ENCODE measurements at regions of chr5 and their contacts with region 1.

Region 1: GRCh38 chr5:142713121-142713706 is 27.3 kb upstream of the FGF1 start:
- DNase-seq: peak; percentile 79
- H3K4me3 ChIP-seq: peak overlapping the region; percentile 59 to 70 (median 67)
- H3K27ac ChIP-seq: peak overlapping the region; percentile 68
- H3K4me1 ChIP-seq: peaks cover 5% of the 10 kb centered on the region
- H3K27me3 ChIP-seq: no peaks in the 10 kb centered on the region
- CTCF ChIP-seq: peak; percentile 73 to 88

Region 2: GRCh38 chr5:142611154-142611553 is 102.1 kb before region 1 on chr5:
- CTCF ChIA-PET with region 1: no interaction called
- dilution Hi-C with region 1: no loop called
- in situ Hi-C with region 1: no loop called
- intact Hi-C with region 1: loop called (anchors 1 kb)
- DNase-seq: peak; percentile 58
- H3K4me3 ChIP-seq: no peak overlapping the region
- H3K27ac ChIP-seq: no peak overlapping the region
- H3K4me1 ChIP-seq: peaks cover 22% of the 10 kb centered on the region
- H3K27me3 ChIP-seq: no peaks in the 10 kb centered on the region
- CTCF ChIP-seq: peak; percentile 87 to 92

Region 3: DNA sequence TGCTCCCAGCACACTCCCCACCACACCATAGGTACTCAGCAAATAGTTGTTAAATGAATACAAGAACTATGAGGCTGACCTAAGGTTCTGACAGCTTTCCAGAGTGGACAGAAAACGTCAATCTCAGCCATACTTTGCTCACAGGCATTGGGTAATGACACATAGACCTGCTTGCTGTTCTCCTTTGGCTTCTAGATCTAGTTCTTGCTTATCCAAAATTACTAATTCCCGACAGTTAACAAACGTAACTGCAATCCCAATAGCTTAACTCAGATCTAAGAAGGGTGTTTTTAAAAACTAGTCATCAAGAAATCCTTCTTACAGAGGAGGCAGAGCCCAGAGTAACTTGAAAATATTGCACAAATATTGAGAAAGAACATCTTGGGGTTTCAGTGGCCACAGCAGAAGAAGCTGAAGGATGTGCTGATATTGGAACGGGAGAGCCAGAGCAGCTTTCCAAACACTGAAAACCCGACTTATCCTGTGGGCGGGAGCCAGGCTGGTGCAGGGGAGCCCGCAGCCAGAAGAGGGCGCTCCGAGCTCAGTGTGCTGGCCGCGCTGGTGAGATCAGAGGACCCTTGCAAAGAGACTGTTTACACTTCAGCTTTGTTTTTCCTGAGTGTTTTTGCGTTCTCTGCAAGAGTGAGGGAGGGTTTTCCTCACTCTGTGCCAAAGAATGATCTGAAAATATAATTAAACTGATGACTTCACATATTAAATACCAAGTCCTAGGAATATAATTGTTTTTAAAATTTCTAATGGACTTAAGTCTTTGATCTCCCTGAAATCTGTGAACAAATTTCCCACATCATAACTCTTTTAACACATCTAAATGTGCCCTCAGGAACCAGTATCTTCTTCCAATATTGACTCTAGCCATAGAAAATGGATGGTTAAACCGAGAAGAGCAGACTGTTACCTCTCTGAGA is 57.6 kb before region 1 on chr5:
- CTCF ChIA-PET with region 1: interaction called, 8 read pairs
- dilution Hi-C with region 1: no loop called
- in situ Hi-C with region 1: no loop called
- intact Hi-C with region 1: loop called (anchors 1 kb)
- DNase-seq: peak; percentile 52
- H3K4me3 ChIP-seq: no peak overlapping the region
- H3K27ac ChIP-seq: no peak overlapping the region
- H3K4me1 ChIP-seq: no peaks in the 10 kb centered on the region
- H3K27me3 ChIP-seq: no peaks in the 10 kb centered on the region
- CTCF ChIP-seq: peak; percentile 96 to 100

Region 4: GRCh38 chr5:142726188-142726731 is 13.0 kb after region 1 on chr5:
- CTCF ChIA-PET with region 1: no interaction called
- dilution Hi-C with region 1: no loop called
- in situ Hi-C with region 1: no loop called
- intact Hi-C with region 1: no loop called
- DNase-seq: peak; percentile 90
- H3K4me3 ChIP-seq: no peak overlapping the region
- H3K27ac ChIP-seq: peak overlapping the region; percentile 96
- H3K4me1 ChIP-seq: peaks cover 36% of the 10 kb centered on the region
- H3K27me3 ChIP-seq: no peaks in the 10 kb centered on the region
- CTCF ChIP-seq: no peak

Region 5: GRCh38 chr5:142881076-142881783 is 168.0 kb after region 1 on chr5:
- CTCF ChIA-PET with region 1: interaction called, 13 read pairs
- dilution Hi-C with region 1: no loop called
- in situ Hi-C with region 1: loop called in 1 of 2 experiments (anchors 5 kb)
- intact Hi-C with region 1: loop called (anchors 1 kb)
- DNase-seq: no peak
- H3K4me3 ChIP-seq: no peak overlapping the region
- H3K27ac ChIP-seq: no peak overlapping the region
- H3K4me1 ChIP-seq: peaks cover 4% of the 10 kb centered on the region
- H3K27me3 ChIP-seq: no peaks in the 10 kb centered on the region
- CTCF ChIP-seq: no peak

Region 6: DNA sequence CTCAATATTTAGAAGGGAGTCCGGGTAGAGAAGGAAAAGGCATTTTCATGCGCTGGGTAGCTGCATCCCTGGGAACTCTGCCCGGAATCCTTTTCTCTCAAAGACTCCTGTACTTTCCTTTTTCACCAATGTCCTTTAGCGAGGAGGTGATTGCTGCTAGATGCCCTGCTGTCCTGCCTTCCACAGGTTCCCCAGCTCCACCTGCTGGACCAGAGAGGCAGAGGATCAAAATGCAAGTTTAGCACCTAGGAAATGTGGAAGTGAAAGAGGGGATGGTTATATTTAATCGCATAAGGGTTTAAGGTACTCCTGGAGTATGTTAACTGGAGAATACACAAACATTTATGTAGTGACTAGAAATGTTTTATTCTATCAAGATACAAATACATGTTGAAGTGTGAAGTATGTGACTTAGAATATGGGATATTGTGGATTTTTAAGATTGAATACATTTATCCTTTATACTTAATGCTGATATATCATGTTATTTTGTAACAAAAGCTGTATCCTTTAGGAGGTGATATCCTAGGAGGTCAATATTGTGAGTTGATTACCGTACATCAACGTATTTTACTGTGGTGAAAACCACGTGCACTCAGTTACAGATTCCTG is 202.7 kb after region 1 on chr5:
- CTCF ChIA-PET with region 1: interaction called, 8 read pairs
- dilution Hi-C with region 1: no loop called
- in situ Hi-C with region 1: no loop called
- intact Hi-C with region 1: loop called (anchors 1 kb)
- DNase-seq: peak; percentile 58
- H3K4me3 ChIP-seq: no peak overlapping the region
- H3K27ac ChIP-seq: no peak overlapping the region
- H3K4me1 ChIP-seq: peaks cover 17% of the 10 kb centered on the region
- H3K27me3 ChIP-seq: no peaks in the 10 kb centered on the region
- CTCF ChIP-seq: peak; percentile 90 to 91

Region 7: DNA sequence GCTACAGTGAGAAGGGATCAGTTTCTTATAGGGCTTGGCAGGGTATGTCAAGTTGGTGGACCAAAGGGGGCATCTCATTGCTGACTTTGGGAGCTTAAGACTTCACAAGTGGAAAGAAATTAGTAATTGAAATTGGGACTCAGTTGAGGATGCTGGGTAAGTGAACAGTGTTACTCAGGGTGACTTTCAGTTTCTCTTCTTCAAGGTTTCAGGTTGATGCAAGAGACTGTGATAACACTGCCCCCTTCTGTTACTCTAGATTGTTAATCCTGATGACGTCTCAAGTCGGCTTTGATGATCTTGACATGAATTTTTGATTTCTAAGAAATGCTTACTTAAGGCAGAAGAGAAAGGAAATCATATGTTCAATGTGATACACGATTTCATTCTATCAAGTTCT is 1478.8 kb after region 1 on chr5:
- CTCF ChIA-PET with region 1: no interaction called
- dilution Hi-C with region 1: no loop called
- in situ Hi-C with region 1: no loop called
- intact Hi-C with region 1: loop called (anchors 10 kb)
- DNase-seq: peak; percentile 75
- H3K4me3 ChIP-seq: peak overlapping the region in 1 of 3 experiments; percentile 23
- H3K27ac ChIP-seq: no peak overlapping the region
- H3K4me1 ChIP-seq: peaks cover 17% of the 10 kb centered on the region
- H3K27me3 ChIP-seq: peaks cover 3% of the 10 kb centered on the region
- CTCF ChIP-seq: peak; percentile 40 to 44

Measured in mammary epithelial cell (primary cell).